ENCODE measurements at regions of chr11 and their contacts with region 1.

Region 1: DNA sequence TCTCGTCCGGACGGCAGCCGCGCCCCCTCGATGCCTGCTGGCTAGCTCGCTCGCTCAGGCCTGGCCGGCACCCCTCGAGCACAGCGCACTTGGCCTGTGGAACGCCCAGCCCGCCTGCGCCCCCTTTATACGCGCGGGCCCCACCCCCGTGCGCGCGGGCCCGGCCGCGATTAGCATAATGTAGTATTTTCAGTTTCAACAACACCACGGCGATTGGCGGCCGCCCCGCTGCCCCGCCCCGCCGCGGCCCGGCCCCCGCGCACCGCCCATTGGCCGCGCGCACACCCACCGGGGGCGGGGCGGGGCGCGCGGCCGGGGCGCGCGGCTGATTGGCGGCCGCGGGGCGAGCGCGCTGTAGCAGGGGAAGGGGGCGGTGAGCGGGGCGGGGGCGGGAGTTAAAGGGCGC is at the start of gene CDKN1C:
- DNase-seq: peak; percentile 85
- H3K4me3 Mint-ChIP-seq: peak within 1 kb of the TSS; percentile 72
- H3K27ac Mint-ChIP-seq: peak within 1 kb of the TSS; percentile 56
- H3K4me1 Mint-ChIP-seq: no peaks in the 10 kb centered on the region
- H3K27me3 Mint-ChIP-seq: peaks cover 23% of the 10 kb centered on the region
- CTCF ChIP-seq: no peak
- total RNA-seq, gene CDKN1C: 2.2 and 2.4 TPM in 2 replicates

Region 2: GRCh38 chr11:2428322-2428795 is 457.3 kb before region 1 on chr11:
- CTCF ChIA-PET with region 1: no interaction called
- intact Hi-C with region 1: loop called (anchors 10 kb)
- DNase-seq: peak; percentile 88
- H3K4me3 Mint-ChIP-seq: no peak overlapping the region
- H3K27ac Mint-ChIP-seq: no peak overlapping the region
- H3K4me1 Mint-ChIP-seq: no peaks in the 10 kb centered on the region
- H3K27me3 Mint-ChIP-seq: peaks cover 31% of the 10 kb centered on the region
- CTCF ChIP-seq: peak; percentile 79

Region 3: DNA sequence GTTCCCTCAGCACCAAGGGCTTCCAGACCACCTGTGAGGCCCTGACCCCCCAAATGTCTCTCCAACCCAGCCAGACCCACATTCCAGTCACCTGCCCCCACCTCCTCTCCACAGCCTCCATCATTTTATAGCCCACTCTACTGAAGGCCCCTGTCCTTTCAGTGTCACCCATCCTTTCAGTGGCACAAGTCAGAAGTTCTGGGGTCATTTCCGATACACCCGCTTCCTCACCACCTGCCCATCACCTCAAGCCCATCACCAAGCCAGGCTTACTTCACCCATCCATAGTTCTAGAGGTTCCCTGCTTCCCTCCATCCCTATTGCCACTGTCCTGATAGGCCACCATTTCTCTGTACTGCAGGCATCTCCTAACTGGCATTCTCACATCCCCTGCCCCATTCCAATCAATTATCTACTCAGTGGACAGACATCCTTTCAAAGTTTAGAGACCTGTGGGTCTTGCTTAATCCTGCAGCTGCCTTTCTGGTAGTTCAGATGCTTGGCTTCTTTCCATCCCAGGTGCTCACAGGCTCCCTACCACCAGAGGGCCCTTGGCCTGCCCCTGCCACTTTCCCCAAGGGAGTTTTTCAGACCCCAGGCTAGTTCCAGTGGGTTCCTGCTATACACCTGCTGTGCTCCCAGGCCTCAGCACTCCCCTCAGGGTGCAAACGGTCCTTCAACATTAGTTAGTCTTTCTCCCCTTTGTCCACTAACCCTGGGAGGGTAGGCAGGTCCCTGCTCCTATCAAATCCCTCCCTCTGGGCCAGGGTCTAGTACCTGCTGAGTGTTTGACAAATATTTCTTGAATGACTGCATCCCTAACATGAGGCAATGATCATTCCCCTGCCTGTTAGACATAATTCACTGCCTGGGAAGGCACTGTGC is 193.4 kb before region 1 on chr11:
- CTCF ChIA-PET with region 1: no interaction called
- intact Hi-C with region 1: loop called (anchors 2 kb)
- DNase-seq: peak; percentile 53
- H3K4me3 Mint-ChIP-seq: no peak overlapping the region
- H3K27ac Mint-ChIP-seq: no peak overlapping the region
- H3K4me1 Mint-ChIP-seq: no peaks in the 10 kb centered on the region
- H3K27me3 Mint-ChIP-seq: no peaks in the 10 kb centered on the region
- CTCF ChIP-seq: peak; percentile 29

Region 4: DNA sequence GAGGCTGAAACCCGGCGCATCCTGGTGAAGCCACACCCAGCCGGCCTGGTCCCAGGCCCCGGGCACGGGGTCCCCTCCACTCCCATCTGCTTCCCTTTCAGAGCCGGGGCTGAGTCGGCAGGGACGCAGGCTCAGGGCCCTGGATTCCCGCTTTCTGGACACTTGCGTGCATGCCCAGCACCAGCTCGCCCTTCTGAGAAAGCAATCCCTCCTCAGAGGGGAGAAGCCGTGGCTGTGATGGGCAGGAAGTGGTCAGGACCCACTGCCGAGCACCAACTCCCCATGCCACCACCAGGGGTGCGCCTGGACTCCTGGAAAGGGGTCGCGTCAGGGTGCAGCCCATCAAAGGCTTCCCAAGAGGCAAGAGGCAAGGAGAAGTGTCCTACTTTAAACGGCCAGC is 15.2 kb before region 1 on chr11:
- CTCF ChIA-PET with region 1: no interaction called
- intact Hi-C with region 1: no loop called
- DNase-seq: no peak
- H3K4me3 Mint-ChIP-seq: no peak overlapping the region
- H3K27ac Mint-ChIP-seq: no peak overlapping the region
- H3K4me1 Mint-ChIP-seq: no peaks in the 10 kb centered on the region
- H3K27me3 Mint-ChIP-seq: peaks cover 12% of the 10 kb centered on the region
- CTCF ChIP-seq: no peak